ENCODE measurements at regions of chr4 and their contacts with region 1.

Region 1: GRCh38 chr4:37603070-37603468 is 83.1 kb downstream of the RELL1 start:
- DNase-seq: peak; percentile 69 to 88 (median 84)
- H3K4me3 ChIP-seq: no peak overlapping the region
- H3K27ac ChIP-seq: no peak overlapping the region
- H3K4me1 ChIP-seq: peaks cover 2% of the 10 kb centered on the region
- H3K27me3 ChIP-seq: no peaks in the 10 kb centered on the region
- CTCF ChIP-seq: peak; percentile 76 to 92 (median 88)
- EP300 ChIP-seq: no peak
- POLR2A ChIP-seq: no peak

Region 2: GRCh38 chr4:37268319-37268718 is 334.8 kb before region 1 on chr4:
- intact Hi-C with region 1: no loop called
- DNase-seq: no peak
- H3K4me3 ChIP-seq: no peak overlapping the region
- H3K27ac ChIP-seq: no peak overlapping the region
- H3K4me1 ChIP-seq: no peaks in the 10 kb centered on the region
- H3K27me3 ChIP-seq: no peaks in the 10 kb centered on the region
- CTCF ChIP-seq: no peak
- EP300 ChIP-seq: no peak
- POLR2A ChIP-seq: no peak

Region 3: GRCh38 chr4:37793562-37793961 is 190.5 kb after region 1 on chr4:
- intact Hi-C with region 1: loop called in 3 of 4 experiments (anchors 5 to 10 kb)
- DNase-seq: no peak
- H3K4me3 ChIP-seq: no peak overlapping the region
- H3K27ac ChIP-seq: no peak overlapping the region
- H3K4me1 ChIP-seq: no peaks in the 10 kb centered on the region
- H3K27me3 ChIP-seq: no peaks in the 10 kb centered on the region
- CTCF ChIP-seq: no peak
- EP300 ChIP-seq: no peak
- POLR2A ChIP-seq: no peak

Region 4: GRCh38 chr4:37802068-37802666 is 199.1 kb after region 1 on chr4:
- intact Hi-C with region 1: loop called (anchors 5 to 10 kb)
- DNase-seq: peak in 2 of 5 donors; percentile 9 to 20
- H3K4me3 ChIP-seq: no peak overlapping the region
- H3K27ac ChIP-seq: no peak overlapping the region
- H3K4me1 ChIP-seq: no peaks in the 10 kb centered on the region
- H3K27me3 ChIP-seq: no peaks in the 10 kb centered on the region
- CTCF ChIP-seq: no peak
- EP300 ChIP-seq: no peak
- POLR2A ChIP-seq: no peak

Region 5: DNA sequence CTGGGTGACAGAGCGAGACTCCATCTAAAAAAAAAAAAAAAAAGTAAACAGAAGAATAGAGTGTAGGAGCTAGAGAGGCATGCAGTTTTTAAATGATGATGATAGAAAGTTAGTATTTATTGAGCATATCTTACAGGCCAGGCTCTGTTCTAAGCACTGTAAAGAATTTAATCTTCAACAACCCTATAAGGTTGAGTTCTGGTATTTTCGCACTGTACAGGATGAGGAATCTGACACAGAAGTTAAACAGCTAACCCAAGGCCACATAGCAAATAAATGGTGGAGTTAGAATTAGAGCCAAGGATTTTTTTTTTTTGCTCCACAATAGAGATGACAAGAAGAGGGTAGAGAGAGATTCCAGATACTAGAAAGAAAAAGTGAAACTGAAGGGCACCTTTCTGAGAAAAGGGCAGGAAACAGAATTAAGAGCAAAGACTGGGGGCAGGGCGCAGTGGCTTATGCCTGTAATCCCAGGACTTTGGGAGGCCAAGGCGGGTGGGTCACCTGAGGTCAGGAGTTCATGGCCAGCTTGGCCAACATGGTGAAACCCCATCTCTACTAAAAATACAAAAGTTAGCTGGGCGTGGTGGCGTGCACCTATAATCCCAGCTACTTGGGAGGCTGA is 1515.1 kb after region 1 on chr4:
- intact Hi-C with region 1: loop called in 1 of 4 experiments (anchors 5 kb)
- DNase-seq: no peak
- H3K4me3 ChIP-seq: no peak overlapping the region
- H3K27ac ChIP-seq: no peak overlapping the region
- H3K4me1 ChIP-seq: no peaks in the 10 kb centered on the region
- H3K27me3 ChIP-seq: no peaks in the 10 kb centered on the region
- CTCF ChIP-seq: no peak
- EP300 ChIP-seq: no peak
- POLR2A ChIP-seq: no peak